GM10248 (cell line): ENCODE measurements at regions of chr12 and their contacts with region 1.

Region 1: DNA sequence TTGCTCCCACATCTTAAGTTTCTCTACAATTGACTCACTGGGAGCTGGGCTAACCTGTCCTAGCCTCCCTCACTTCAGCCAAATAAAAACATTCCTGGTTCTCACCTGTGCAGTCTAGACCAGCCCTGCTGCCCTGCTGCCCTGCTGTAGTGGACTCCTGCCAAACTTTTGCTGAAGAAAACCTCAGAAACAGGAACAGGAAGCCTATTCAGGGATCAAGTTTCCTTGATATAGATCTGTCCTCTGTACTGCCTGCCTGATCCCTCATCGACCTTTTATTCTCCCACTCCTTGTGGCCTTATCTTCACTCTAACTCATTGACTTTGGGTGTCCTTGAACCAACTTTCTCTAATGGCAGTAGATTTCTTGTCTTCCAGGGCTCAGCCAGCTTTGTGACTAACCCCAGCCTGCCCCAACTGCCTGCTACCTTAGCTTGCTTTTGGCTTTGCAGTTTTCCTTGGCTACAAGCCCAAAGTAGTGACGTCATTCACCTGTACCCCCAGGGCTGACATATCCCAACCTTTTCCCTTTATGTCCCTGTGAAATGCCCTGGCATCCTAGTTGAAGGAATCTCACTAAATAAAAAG is 234.8 kb downstream of the DUSP6 start:
- DNase-seq: no peak
- CTCF ChIP-seq: no peak

Region 2: GRCh38 chr12:89098441-89099112 is 19.0 kb before region 1 on chr12:
- CTCF ChIA-PET with region 1: no interaction called
- POLR2A ChIA-PET with region 1: no interaction called
- DNase-seq: no peak
- CTCF ChIP-seq: no peak

Region 3: DNA sequence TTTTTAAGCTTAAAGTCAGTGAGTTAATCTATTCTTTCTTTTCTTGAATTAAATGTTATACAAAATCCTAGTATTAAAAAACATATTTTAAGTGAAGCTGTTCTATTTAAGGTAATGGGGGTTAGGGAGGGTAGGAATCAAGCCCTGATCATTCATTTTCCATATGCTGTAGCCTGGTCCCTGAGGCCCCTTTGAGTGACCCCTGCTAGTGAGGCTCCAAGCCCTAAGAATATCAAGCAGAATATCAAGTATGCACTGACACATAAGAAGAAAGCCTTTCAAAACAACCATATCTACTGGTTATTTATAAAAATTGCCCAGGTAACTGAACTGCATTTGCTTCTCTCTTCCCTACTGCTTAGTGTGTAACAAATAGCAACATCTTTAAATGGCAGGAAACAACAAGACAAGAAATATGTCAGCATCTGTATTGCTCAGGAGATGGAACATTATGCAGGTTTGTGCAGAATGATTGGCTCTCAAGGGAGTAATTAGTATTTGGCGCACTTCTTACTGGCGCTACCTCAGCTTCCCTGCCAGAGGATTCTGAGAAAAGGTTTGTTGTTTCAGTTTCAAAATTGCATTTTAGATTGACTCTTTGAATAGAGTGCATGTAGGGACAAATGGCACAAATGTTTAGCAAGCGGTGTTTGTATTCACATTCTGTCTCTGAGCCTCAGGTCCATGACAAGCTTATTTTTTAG is 11.8 kb after region 1 on chr12:
- CTCF ChIA-PET with region 1: interaction called, 11 read pairs
- POLR2A ChIA-PET with region 1: no interaction called
- DNase-seq: no peak
- CTCF ChIP-seq: no peak